Activated CD8-positive, alpha-beta memory T cell treated with anti-CD3 and anti-CD28 coated beads, Interleukin-2, amount 10 ng/mL, durations not matched to agents 7 days and 5 days (primary cell): ENCODE measurements at regions of chr9 and their contacts with region 1.

Region 1: GRCh38 chr9:5886114-5886939 is 4.4 kb upstream of the MLANA start:
- DNase-seq: peak; percentile 90
- ATAC-seq: peak; percentile 99
- H3K4me3 Mint-ChIP-seq: no peak overlapping the region
- H3K27ac Mint-ChIP-seq: peak overlapping the region; percentile 55
- H3K4me1 Mint-ChIP-seq: peaks cover 9% of the 10 kb centered on the region
- H3K27me3 Mint-ChIP-seq: peaks cover 8% of the 10 kb centered on the region

Region 2: GRCh38 chr9:5425006-5425628 is 461.2 kb before region 1 on chr9:
- CTCF ChIA-PET with region 1: no interaction called
- DNase-seq: no peak
- ATAC-seq: peak; percentile 39
- H3K4me3 Mint-ChIP-seq: no peak overlapping the region
- H3K27ac Mint-ChIP-seq: no peak overlapping the region
- H3K4me1 Mint-ChIP-seq: peaks cover 4% of the 10 kb centered on the region
- H3K27me3 Mint-ChIP-seq: no peaks in the 10 kb centered on the region

Region 3: GRCh38 chr9:5832543-5833529 is 53.5 kb before region 1 on chr9 and contains the start of gene ERMP1:
- CTCF ChIA-PET with region 1: interaction called, 24 read pairs
- DNase-seq: peak; percentile 91
- ATAC-seq: peak; percentile 88
- H3K4me3 Mint-ChIP-seq: peak within 1 kb of the TSS; percentile 94
- H3K27ac Mint-ChIP-seq: peak within 1 kb of the TSS; percentile 92
- H3K4me1 Mint-ChIP-seq: peaks cover 45% of the 10 kb centered on the region
- H3K27me3 Mint-ChIP-seq: no peaks in the 10 kb centered on the region
- total RNA-seq, gene ERMP1: 25.0 to 32.3 TPM

Region 4: GRCh38 chr9:5872511-5872910 is 13.8 kb before region 1 on chr9:
- CTCF ChIA-PET with region 1: interaction called, 12 read pairs
- DNase-seq: no peak
- ATAC-seq: no peak
- H3K4me3 Mint-ChIP-seq: no peak overlapping the region
- H3K27ac Mint-ChIP-seq: no peak overlapping the region
- H3K4me1 Mint-ChIP-seq: peaks cover 28% of the 10 kb centered on the region
- H3K27me3 Mint-ChIP-seq: no peaks in the 10 kb centered on the region

Region 5: GRCh38 chr9:6015278-6016157 is 129.2 kb after region 1 on chr9 and contains the start of gene RANBP6:
- CTCF ChIA-PET with region 1: interaction called, 14 read pairs
- DNase-seq: peak; percentile 96
- ATAC-seq: peak; percentile 100
- H3K4me3 Mint-ChIP-seq: peak within 1 kb of the TSS; percentile 82
- H3K27ac Mint-ChIP-seq: peak within 1 kb of the TSS; percentile 99
- H3K4me1 Mint-ChIP-seq: peaks cover 51% of the 10 kb centered on the region
- H3K27me3 Mint-ChIP-seq: no peaks in the 10 kb centered on the region
- total RNA-seq, gene RANBP6: 18.8 to 24.0 TPM

Region 6: GRCh38 chr9:6055213-6055612 is 168.9 kb after region 1 on chr9:
- CTCF ChIA-PET with region 1: interaction called, 47 read pairs
- DNase-seq: peak; percentile 61
- ATAC-seq: peak; percentile 73
- H3K4me3 Mint-ChIP-seq: no peak overlapping the region
- H3K27ac Mint-ChIP-seq: no peak overlapping the region
- H3K4me1 Mint-ChIP-seq: peaks cover 2% of the 10 kb centered on the region
- H3K27me3 Mint-ChIP-seq: peaks cover 11% of the 10 kb centered on the region